ENCODE measurements at regions of chr2 and their contacts with region 1.

Region 1: GRCh38 chr2:176088048-176088936 is 4.2 kb upstream of the HOXD13 start:
- DNase-seq: peak; percentile 76
- H3K4me3 ChIP-seq: no peak overlapping the region
- H3K27ac ChIP-seq: no peak overlapping the region
- H3K4me1 ChIP-seq: peaks cover 14% of the 10 kb centered on the region
- H3K27me3 ChIP-seq: peaks cover 27% of the 10 kb centered on the region
- CTCF ChIP-seq: peak; percentile 92

Region 2: GRCh38 chr2:175203621-175204496 is 884.4 kb before region 1 on chr2:
- CTCF ChIA-PET with region 1: no interaction called
- POLR2A ChIA-PET with region 1: no interaction called
- intact Hi-C with region 1: loop called (anchors 5 kb)
- DNase-seq: peak; percentile 78
- H3K4me3 ChIP-seq: no peak overlapping the region
- H3K27ac ChIP-seq: no peak overlapping the region
- H3K4me1 ChIP-seq: no peaks in the 10 kb centered on the region
- H3K27me3 ChIP-seq: peaks cover 15% of the 10 kb centered on the region
- CTCF ChIP-seq: peak; percentile 78

Region 3: DNA sequence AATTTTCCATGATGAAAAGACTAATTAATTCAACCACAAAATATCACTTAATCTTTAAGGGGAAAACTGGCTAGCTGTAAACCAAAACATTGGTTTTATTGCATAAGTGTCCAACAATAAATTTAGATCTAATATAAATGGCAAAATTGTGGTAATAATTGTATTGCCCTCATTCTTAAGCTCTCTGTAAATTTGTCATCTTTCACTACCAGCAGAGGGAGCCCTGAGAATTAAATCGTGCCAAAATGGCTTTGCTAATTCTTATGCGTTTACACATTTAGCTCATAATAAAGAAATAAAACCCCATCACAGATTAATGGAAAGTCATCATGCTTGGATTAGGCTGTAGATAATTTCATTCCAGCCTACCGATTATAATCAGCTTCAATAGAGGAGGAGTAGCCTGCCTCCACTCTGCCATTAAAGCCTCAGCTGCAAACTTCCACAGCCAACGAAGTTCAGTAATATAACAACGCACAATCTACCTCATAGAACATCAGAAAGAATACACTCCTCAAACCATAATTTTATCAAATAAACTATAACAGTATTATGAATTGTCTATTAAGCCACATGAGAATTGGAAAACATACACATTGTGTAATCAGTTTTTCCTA is 836.8 kb before region 1 on chr2:
- CTCF ChIA-PET with region 1: interaction called, 8 read pairs
- POLR2A ChIA-PET with region 1: no interaction called
- intact Hi-C with region 1: loop called (anchors 5 kb)
- DNase-seq: peak; percentile 72
- H3K4me3 ChIP-seq: no peak overlapping the region
- H3K27ac ChIP-seq: no peak overlapping the region
- H3K4me1 ChIP-seq: no peaks in the 10 kb centered on the region
- H3K27me3 ChIP-seq: no peaks in the 10 kb centered on the region
- CTCF ChIP-seq: peak; percentile 84

Region 4: GRCh38 chr2:175309799-175310198 is 778.5 kb before region 1 on chr2:
- CTCF ChIA-PET with region 1: no interaction called
- POLR2A ChIA-PET with region 1: no interaction called
- intact Hi-C with region 1: loop called (anchors 5 kb)
- DNase-seq: peak; percentile 74
- H3K4me3 ChIP-seq: no peak overlapping the region
- H3K27ac ChIP-seq: no peak overlapping the region
- H3K4me1 ChIP-seq: peaks cover 8% of the 10 kb centered on the region
- H3K27me3 ChIP-seq: no peaks in the 10 kb centered on the region
- CTCF ChIP-seq: peak; percentile 73

Region 5: GRCh38 chr2:175366815-175367214 is 721.5 kb before region 1 on chr2:
- CTCF ChIA-PET with region 1: interaction called, 4 read pairs
- POLR2A ChIA-PET with region 1: interaction called, 3 read pairs
- intact Hi-C with region 1: loop called (anchors 2 kb)
- DNase-seq: peak; percentile 87
- H3K4me3 ChIP-seq: no peak overlapping the region
- H3K27ac ChIP-seq: no peak overlapping the region
- H3K4me1 ChIP-seq: peaks cover 85% of the 10 kb centered on the region
- H3K27me3 ChIP-seq: no peaks in the 10 kb centered on the region
- CTCF ChIP-seq: peak; percentile 93